Adrenal gland (tissue), 19 donors: ENCODE measurements at regions of chr10 and their contacts with region 1.

Region 1: GRCh38 chr10:133230387-133231195 is 574 bp downstream of the UTF1 start:
- DNase-seq: no peak
- H3K4me3 ChIP-seq: peak overlapping the region in 1 of 4 donors; percentile 36
- H3K27ac ChIP-seq: no peak overlapping the region
- H3K4me1 ChIP-seq: no peaks in the 10 kb centered on the region
- H3K27me3 ChIP-seq: peaks cover 64% of the 10 kb centered on the region
- CTCF ChIP-seq: no peak
- POLR2A ChIP-seq: no peak

Region 2: DNA sequence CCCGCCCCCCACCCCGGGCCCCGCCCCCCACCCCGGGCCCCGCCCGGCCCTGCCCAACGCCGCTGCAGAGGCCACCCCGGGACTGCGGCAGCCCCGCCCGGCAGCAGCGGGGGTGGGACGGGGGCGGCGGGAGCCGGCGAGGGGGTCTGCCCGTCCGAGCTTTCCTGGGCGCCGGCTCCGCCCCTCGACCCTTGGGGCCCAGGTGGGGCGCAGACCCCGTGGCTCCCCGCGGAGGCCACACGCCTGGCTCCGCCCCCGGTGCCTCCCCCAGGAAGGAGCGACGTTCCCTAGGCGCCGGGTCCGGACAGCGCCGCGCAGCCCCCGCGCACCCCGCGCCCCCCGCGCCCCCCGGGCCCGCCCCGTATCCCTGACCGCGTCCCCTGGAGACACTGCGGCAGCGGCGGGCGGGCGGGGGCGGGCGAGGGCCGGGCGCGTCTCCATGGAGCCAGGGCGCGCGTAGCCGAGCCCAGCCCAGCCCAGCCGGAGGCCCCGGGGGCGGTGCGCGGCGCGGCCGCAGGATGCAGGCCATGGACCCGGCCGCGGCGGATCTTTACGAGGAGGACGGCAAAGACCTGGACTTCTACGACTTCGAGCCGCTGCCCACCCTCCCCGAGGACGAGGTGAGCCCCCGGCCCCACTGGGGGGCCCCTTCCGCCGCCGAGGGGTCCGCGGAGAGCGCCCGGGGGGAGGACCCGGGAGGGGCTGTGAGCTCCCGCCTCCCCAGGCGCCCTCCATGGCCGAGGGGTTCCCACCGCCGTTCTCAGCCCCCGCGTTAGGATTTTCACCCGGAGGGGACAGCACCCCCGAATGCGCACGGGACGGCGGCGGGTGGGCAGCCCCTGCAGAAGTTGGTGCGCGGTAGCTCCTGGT is 70.4 kb before region 1 on chr10 and contains the start of gene KNDC1:
- intact Hi-C with region 1: loop called in 1 of 2 experiments (anchors 10 kb)
- DNase-seq: peak; percentile 51 to 74 (median 65)
- H3K4me3 ChIP-seq: peak within 1 kb of the TSS in 3 of 4 donors; percentile 59 to 86 (median 62)
- H3K27ac ChIP-seq: peak within 1 kb of the TSS; percentile 69 to 91 (median 84)
- H3K4me1 ChIP-seq: peaks cover 37 to 48% of the 10 kb centered on the region in 2 donors
- H3K27me3 ChIP-seq: no peaks in the 10 kb centered on the region
- CTCF ChIP-seq: no peak
- POLR2A ChIP-seq: peak in 1 of 2 donors; percentile 58
- total RNA-seq, gene KNDC1: 9.7 to 93.4 (median 40.7) TPM

Region 3: GRCh38 chr10:133278577-133279265 is 48.1 kb after region 1 on chr10:
- intact Hi-C with region 1: no loop called
- DNase-seq: peak in 6 of 7 donors; percentile 47 to 86 (median 56)
- H3K4me3 ChIP-seq: no peak overlapping the region
- H3K27ac ChIP-seq: peak overlapping the region in 2 of 5 donors; percentile 49 to 57
- H3K4me1 ChIP-seq: peaks cover 0 to 26% of the 10 kb centered on the region in 2 donors
- H3K27me3 ChIP-seq: no peaks in the 10 kb centered on the region
- CTCF ChIP-seq: no peak
- POLR2A ChIP-seq: no peak

Region 4: GRCh38 chr10:133405844-133406527 is 175.4 kb after region 1 on chr10:
- intact Hi-C with region 1: no loop called
- DNase-seq: no peak
- H3K4me3 ChIP-seq: no peak overlapping the region
- H3K27ac ChIP-seq: no peak overlapping the region
- H3K4me1 ChIP-seq: peaks cover 2 to 6% of the 10 kb centered on the region in 2 donors
- H3K27me3 ChIP-seq: no peaks in the 10 kb centered on the region
- CTCF ChIP-seq: no peak
- POLR2A ChIP-seq: no peak